ENCODE measurements at regions of chr1 and their contacts with region 1.

Region 1: DNA sequence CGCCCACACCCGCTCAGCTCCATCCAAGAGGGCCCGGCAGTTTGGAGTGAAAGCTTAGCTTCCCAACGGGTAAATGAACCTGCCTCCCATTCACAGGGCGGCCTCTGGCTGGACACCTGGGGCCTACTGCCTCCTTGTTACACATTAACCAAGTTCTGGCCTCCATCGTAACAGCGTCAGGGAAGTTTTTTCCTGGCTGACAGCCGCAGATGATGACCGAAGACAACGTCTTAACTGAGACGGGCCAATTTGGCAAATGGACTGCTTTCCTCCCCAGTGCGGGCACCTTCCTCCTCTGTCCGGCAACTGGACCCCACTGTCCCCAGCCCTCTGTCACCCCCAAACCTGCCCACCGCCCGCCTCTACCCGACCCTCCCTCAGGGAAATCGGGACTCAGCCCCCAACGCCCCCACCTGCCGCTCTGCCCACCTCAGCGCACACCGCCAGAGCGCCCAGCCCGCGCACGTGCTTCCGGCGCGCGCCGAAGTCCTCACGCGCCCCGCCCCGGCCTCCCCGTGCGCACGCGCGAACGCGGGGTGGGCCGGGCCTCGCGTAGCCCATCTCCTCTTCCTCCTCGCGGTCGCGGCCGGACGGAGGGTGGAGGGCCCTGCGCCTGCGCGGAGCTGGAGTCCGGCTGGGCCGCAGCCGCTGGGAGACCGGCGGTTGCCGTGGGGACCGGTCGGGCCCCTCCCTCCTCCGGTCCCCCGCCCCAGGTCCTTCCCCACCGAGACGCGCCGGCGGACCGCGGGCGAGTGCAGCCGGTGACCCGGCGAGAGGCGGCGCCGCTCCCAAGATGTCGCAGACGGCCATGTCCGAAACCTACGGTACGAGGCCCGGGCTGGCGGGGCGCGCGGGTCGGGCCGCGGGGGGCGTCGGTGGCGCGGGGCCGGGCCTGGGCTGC is at the start of gene RAB4A:
- DNase-seq: peak; percentile 84
- ATAC-seq: peak; percentile 87
- H3K4me3 Mint-ChIP-seq: peak within 1 kb of the TSS; percentile 82
- H3K27ac Mint-ChIP-seq: peak within 1 kb of the TSS; percentile 71
- H3K4me1 Mint-ChIP-seq: peaks cover 31% of the 10 kb centered on the region
- H3K27me3 Mint-ChIP-seq: no peaks in the 10 kb centered on the region
- total RNA-seq, gene RAB4A: 22.1 to 24.0 TPM

Region 2: GRCh38 chr1:229117664-229118300 is 153.0 kb before region 1 on chr1:
- CTCF ChIA-PET with region 1: no interaction called
- POLR2A ChIA-PET with region 1: no interaction called
- intact Hi-C with region 1: no loop called
- DNase-seq: no peak
- ATAC-seq: no peak
- H3K4me3 Mint-ChIP-seq: no peak overlapping the region
- H3K27ac Mint-ChIP-seq: no peak overlapping the region
- H3K4me1 Mint-ChIP-seq: peaks cover 7% of the 10 kb centered on the region
- H3K27me3 Mint-ChIP-seq: no peaks in the 10 kb centered on the region

Region 3: DNA sequence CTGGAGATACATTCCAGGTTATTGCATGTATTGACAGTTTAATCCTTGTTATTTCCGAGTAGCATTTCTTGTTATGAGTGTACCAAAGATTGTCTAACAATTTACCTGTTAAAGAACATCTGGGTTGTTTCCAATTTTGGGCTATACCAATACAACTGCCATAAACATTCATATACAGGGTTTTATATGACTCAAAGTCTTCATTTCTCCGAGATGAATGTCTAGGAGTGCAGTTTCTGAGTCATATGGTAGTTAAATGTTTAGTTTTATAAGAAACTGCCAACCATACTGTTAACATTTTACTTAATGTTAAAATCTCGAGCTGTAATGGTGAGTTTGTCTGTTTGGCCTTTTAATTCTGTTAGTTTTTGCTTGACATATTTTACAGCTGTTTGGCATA is 10.1 kb after region 1 on chr1:
- CTCF ChIA-PET with region 1: no interaction called
- POLR2A ChIA-PET with region 1: no interaction called
- intact Hi-C with region 1: loop called in 1 of 2 experiments (anchors 1 kb)
- DNase-seq: no peak
- ATAC-seq: peak; percentile 85
- H3K4me3 Mint-ChIP-seq: no peak overlapping the region
- H3K27ac Mint-ChIP-seq: no peak overlapping the region
- H3K4me1 Mint-ChIP-seq: peaks cover 36% of the 10 kb centered on the region
- H3K27me3 Mint-ChIP-seq: no peaks in the 10 kb centered on the region

Region 4: DNA sequence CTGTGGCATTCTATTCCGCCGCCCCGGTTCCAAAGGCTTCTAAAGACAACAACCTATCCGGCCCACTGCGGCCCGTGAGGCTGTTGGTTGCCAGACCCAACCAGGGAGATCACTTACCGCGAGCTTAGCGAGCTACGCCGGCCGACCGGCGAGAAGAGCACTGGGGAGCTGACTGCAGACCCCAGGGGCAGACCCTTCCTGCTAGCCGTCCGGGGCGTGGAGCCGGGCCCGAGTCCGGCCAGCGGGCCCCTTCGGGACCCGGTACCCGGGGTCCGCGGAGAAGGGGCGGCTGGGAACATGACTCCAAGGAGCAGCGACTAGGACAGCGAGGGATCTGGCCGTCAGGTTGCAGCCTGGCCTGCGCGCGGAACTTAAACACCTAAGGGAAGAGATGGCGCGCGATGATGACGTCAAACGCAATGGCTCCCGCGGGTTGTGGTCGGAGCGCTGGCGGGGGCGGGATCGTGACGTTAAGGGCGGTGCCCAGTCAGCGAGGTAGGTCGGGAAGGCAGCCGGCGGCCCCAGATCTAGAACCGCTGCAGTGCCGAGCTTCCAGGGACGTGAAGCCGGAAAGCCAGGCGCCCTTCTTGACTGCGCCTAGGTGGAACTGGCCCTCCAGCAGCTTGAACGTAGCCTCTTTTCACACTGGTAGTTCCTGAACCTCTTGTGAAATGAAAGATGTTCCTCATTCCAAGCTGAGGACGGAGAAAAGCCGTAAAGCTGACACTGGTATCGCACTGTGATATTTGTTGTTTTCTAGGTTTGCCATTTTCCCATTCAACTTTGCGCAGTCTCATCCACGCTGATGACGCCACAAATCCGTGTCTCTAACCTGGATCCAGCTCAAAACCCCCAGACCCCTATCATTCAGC is 237.4 kb after region 1 on chr1 and contains the start of gene NUP133:
- CTCF ChIA-PET with region 1: interaction called, 3 read pairs
- POLR2A ChIA-PET with region 1: no interaction called
- intact Hi-C with region 1: loop called in 1 of 2 experiments (anchors 1 kb)
- DNase-seq: peak; percentile 100
- ATAC-seq: peak; percentile 95
- H3K4me3 Mint-ChIP-seq: peak within 1 kb of the TSS; percentile 95
- H3K27ac Mint-ChIP-seq: peak within 1 kb of the TSS; percentile 92
- H3K4me1 Mint-ChIP-seq: peaks cover 24% of the 10 kb centered on the region
- H3K27me3 Mint-ChIP-seq: no peaks in the 10 kb centered on the region
- total RNA-seq, gene NUP133: 53.5 to 57.5 TPM

Region 5: GRCh38 chr1:229625915-229626831 is 355.4 kb after region 1 on chr1 and contains the starts of genes TAF5L and URB2:
- CTCF ChIA-PET with region 1: no interaction called
- POLR2A ChIA-PET with region 1: no interaction called
- intact Hi-C with region 1: loop called (anchors 2 to 10 kb)
- DNase-seq: peak; percentile 93
- ATAC-seq: peak; percentile 92
- H3K4me3 Mint-ChIP-seq: peak within 1 kb of the TSS; percentile 89
- H3K27ac Mint-ChIP-seq: peak within 1 kb of the TSS; percentile 96
- H3K4me1 Mint-ChIP-seq: peaks cover 57% of the 10 kb centered on the region
- H3K27me3 Mint-ChIP-seq: no peaks in the 10 kb centered on the region
- total RNA-seq, gene TAF5L: 16.5 to 17.6 TPM
- total RNA-seq, gene URB2: 13.9 to 16.5 TPM